Spleen (tissue), 13 donors: ENCODE measurements at regions of chr1 and their contacts with region 1.

Region 1: DNA sequence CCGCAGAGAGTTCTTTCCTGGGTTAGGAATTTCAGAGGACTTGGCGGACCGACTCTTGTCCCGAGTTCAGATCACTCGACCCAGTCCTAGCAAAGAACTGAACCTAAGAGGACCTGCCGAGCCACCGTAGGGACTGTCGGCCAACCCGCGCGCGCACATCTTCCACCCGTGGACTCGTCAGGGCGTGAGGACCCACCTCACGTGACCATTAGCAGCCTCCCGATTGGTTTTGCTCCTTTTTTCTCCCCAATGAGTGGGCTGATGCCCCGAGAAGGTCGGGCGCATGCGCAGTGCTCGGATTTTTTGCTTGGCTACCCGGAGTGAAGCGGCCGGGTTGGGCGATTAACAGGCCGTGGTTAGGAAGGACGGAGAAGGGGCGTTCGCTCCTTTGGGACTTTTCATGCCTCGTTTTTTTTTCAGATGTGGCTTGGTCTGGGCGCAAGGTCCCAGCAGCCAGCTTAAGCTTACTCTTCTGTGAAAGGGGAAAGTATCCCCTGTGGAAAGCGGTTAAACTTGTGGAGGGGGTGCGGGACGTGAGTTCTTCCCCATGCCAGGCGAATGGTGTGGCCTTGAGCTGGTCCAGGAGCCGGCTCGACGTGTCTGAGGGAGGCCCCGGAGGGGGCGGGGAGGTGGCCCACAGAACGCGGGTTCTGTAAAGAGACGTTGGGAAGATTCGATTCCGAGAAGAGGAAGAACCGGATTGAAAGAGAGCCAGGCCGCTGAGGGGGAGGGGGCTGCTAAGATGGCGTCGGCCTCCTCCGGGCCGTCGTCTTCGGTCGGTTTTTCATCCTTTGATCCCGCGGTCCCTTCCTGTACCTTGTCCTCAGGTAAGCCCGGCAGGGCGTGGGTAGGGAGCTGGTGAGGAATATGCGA is at the start of gene PIP5K1A:
- DNase-seq: peak; percentile 99
- H3K4me3 ChIP-seq: peak within 1 kb of the TSS; percentile 69 to 96 (median 86)
- H3K27ac ChIP-seq: peak within 1 kb of the TSS; percentile 74 to 96 (median 93)
- H3K4me1 ChIP-seq: peaks cover 32 to 66% (median 53%) of the 10 kb centered on the region in 6 donors
- H3K27me3 ChIP-seq: no peaks in the 10 kb centered on the region
- CTCF ChIP-seq: peak in 1 of 11 experiments; percentile 16
- POLR2A ChIP-seq: peak in 2 of 3 donors; percentile 52 to 53
- total RNA-seq, gene PIP5K1A: 48.0 to 83.6 (median 60.6) TPM

Region 2: GRCh38 chr1:151254217-151255213 is 56.0 kb after region 1 on chr1 and contains the start of gene PSMD4:
- intact Hi-C with region 1: loop called (anchors 5 kb)
- DNase-seq: peak; percentile 95
- H3K4me3 ChIP-seq: peak within 1 kb of the TSS; percentile 77 to 98 (median 83)
- H3K27ac ChIP-seq: peak within 1 kb of the TSS; percentile 89 to 96 (median 92)
- H3K4me1 ChIP-seq: peaks cover 11 to 60% (median 41%) of the 10 kb centered on the region in 6 donors
- H3K27me3 ChIP-seq: no peaks in the 10 kb centered on the region
- CTCF ChIP-seq: peak in 1 of 11 experiments; percentile 5
- POLR2A ChIP-seq: peak in 2 of 3 donors; percentile 17 to 71
- total RNA-seq, gene PSMD4: 90.8 to 157 (median 121) TPM